ENCODE measurements at regions of chr1 and their contacts with region 1.

Region 1: DNA sequence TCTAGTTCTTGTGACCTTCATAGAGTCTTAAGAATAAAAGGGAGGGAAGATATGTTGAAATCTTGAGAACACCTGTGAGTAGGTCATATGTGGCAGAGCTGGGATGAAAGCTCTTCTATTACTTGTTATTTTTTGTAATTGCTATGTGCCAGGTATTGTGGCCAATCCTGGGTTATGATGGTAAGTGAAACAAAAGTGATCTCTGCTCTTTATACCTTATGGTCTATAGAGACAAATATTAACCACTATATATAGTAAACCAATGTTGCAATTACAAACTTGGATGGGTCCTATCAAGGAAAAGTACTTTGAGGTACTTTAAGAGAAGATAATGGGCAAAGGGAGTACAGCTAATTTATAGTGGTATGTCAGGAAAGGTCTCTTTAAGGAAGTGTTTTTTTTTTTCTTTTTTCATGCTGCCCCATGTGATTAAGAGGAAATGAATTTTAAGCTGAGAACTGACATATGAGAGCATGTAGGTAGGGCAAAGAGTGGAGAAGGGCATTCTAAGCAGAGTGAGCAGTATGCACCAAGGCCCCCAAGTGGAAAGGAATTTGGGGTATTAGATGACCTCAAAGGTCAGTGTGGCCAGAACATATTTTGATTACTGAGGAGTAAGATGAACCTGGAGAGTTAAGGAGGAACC is 43.3 kb downstream of the POU2F1 start:
- DNase-seq: no peak
- ATAC-seq: peak in 2 of 4 donors; percentile 11 to 34
- H3K4me3 ChIP-seq: no peak overlapping the region
- H3K27ac ChIP-seq: peak overlapping the region in 1 of 12 donors; percentile 42
- H3K4me1 ChIP-seq: peaks cover 0 to 66% (median 41%) of the 10 kb centered on the region in 12 donors
- H3K27me3 ChIP-seq: no peaks in the 10 kb centered on the region
- CTCF ChIP-seq: no peak
- POLR2A ChIP-seq: no peak

Region 2: GRCh38 chr1:167387251-167387910 is 123.4 kb after region 1 on chr1:
- intact Hi-C with region 1: loop called in 2 of 10 experiments (anchors 10 kb)
- DNase-seq: no peak
- ATAC-seq: peak in 3 of 4 donors; percentile 26 to 64 (median 57)
- H3K4me3 ChIP-seq: no peak overlapping the region
- H3K27ac ChIP-seq: peak overlapping the region in 1 of 12 donors; percentile 38
- H3K4me1 ChIP-seq: peaks cover 0 to 8% (median 0%) of the 10 kb centered on the region in 12 donors
- H3K27me3 ChIP-seq: no peaks in the 10 kb centered on the region
- CTCF ChIP-seq: no peak
- POLR2A ChIP-seq: no peak

Region 3: DNA sequence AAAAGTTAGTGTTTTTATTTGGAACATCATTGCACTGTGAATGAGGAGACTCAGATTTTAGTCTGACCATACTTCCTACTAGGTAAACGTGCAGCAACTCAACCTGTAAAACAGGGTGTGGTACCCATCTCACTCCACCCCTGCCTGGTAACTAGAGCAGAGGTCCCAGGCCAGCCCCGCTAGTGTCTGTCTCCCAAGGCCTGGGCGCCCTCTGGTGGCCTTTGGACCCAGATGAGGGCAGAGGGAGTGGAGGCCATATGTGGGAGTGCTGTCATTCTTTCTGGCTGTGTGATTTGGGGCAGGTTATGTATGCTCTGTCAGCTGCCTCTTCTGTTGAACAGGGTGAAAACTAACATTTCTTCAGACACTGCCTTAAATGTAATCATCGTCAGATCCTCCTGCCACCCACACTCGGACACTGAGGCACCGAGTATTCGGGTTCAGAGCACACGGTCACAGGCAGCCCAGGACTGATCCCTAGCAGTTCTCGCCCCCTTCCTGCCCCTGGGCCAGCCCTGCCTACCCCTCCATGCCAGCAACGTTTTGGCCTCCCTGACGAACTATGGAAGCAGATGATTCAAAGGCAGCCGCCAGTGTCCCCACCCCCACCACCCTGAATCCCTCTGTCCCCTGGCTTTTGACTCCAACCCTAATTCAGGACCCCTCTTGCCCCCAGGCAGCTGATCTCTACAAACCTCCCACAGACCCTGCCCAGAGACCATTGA is 178.3 kb after region 1 on chr1:
- intact Hi-C with region 1: loop called (anchors 1 to 5 kb)
- DNase-seq: peak; percentile 79 to 91 (median 87)
- ATAC-seq: peak; percentile 86 to 96 (median 94)
- H3K4me3 ChIP-seq: no peak overlapping the region
- H3K27ac ChIP-seq: no peak overlapping the region
- H3K4me1 ChIP-seq: peaks cover 0 to 17% (median 9%) of the 10 kb centered on the region in 12 donors
- H3K27me3 ChIP-seq: peaks cover 0 to 18% (median 10%) of the 10 kb centered on the region in 9 donors
- CTCF ChIP-seq: peak; percentile 79 to 94 (median 88)
- POLR2A ChIP-seq: no peak